ENCODE measurements at regions of chr1 and their contacts with region 1.

Region 1: DNA sequence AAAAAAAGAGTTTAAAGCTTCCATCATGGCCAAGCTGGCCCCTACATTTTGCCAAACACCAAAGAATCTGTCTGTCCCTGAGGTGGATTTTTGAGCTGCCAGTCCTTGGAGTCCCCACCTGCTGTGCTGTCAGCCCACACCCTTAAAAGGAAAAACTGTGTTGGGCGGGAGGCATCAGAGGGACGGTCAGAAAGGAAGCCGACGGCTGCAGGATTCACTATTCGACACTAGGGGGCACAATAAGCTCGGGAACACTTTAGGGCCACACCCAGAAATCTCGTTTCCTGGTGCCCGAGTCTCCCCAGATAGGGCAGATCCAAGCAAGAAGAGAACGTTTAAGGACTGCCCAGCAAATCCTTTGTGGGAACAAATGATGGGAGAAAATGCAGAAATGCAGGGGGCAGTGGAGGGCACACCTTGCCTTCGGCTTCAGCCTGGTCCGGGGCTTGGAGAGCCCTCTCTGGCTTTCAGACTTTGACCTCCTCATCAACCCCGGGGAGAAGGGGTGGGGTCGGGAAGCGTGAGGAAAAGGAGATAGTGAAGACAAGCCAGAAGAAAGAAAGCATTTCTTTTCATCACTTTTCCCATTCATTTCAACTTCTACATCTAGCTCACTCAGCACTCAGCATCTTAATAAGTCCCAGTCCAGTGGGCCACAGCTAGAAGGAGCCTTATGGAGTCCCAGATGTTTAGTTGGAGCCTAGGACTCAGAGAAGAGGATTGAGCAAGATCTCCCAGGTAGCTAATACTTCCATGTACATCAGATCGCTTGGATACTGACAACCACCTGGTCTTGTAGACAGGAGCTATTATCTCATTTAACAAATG is 5.0 kb upstream of the CTTNBP2NL start:
- DNase-seq: peak; percentile 73 to 83 (median 77)
- ATAC-seq: peak; percentile 93 to 95 (median 94)
- H3K4me3 ChIP-seq: peak overlapping the region; percentile 21 to 33 (median 33)
- H3K27ac ChIP-seq: peak overlapping the region; percentile 36 to 52 (median 45)
- H3K4me1 ChIP-seq: peaks cover 0 to 9% (median 0%) of the 10 kb centered on the region in 4 donors
- H3K27me3 ChIP-seq: no peaks in the 10 kb centered on the region
- CTCF ChIP-seq: peak; percentile 89 to 95 (median 91)
- POLR2A ChIP-seq: no peak

Region 2: DNA sequence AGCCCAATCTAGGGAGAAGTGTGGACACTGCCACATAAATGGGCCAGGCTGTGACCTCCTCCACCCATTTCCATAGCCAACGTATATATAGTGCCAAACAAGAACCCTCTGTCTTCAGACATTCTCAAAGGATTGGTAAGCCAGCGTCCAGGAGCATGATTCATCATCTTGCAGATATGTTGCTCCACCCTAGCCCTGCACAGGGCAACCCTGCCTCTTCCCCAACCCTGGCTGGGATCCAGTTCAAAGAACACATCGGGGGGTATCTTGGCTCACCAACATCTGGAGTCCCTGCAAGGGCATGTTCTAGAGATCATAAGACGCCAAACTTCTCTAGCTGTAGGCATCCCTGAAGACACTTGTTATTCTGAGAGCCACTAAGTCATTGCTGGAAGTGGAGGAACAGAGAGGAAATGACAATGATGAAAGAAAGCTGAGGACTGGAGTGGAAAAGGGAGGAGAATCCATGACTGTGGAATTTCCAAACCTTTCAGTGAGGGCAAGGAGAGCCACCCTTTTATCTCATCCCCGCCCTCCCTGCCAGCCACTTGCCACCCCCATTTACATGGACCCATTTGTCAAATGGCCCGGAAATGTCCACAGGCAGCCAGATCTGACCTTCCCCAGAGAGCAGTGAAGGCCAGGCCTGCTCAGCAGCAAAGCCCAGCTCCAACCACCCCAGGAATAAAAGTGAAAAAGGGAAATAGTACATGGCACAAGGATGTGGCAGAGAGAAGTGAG is 139.1 kb before region 1 on chr1:
- intact Hi-C with region 1: no loop called
- DNase-seq: no peak
- ATAC-seq: no peak
- H3K4me3 ChIP-seq: no peak overlapping the region
- H3K27ac ChIP-seq: no peak overlapping the region
- H3K4me1 ChIP-seq: no peaks in the 10 kb centered on the region
- H3K27me3 ChIP-seq: no peaks in the 10 kb centered on the region
- CTCF ChIP-seq: no peak
- POLR2A ChIP-seq: no peak

Region 3: DNA sequence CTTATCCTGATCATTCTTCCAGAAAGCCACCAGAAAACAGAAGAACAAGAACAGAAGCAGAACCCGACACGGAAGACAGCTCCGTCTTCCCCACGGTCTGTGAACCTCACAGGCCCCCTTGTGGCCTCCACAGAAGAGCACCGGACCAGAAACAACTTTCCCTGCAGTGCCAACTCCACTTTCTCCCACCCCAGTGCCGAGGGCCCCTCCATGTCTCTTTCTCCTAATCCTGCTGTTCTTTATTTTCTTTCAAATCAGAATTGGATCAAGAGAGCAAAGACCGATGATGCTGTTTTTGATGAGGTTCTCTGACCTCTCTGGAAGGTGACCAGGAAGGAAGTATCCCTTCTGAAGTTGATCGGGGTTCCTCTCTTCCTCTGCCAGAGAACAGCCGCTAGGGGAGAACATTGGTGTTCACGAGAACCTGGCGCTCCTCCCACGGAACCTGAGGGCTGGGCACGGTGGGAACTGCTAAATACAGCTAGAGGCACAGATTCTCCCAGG is 53.9 kb before region 1 on chr1:
- intact Hi-C with region 1: no loop called
- DNase-seq: peak in 2 of 3 donors; percentile 52 to 57
- ATAC-seq: peak; percentile 87 to 96 (median 90)
- H3K4me3 ChIP-seq: no peak overlapping the region
- H3K27ac ChIP-seq: no peak overlapping the region
- H3K4me1 ChIP-seq: no peaks in the 10 kb centered on the region
- H3K27me3 ChIP-seq: no peaks in the 10 kb centered on the region
- CTCF ChIP-seq: peak; percentile 48 to 64 (median 62)
- POLR2A ChIP-seq: no peak

Region 4: DNA sequence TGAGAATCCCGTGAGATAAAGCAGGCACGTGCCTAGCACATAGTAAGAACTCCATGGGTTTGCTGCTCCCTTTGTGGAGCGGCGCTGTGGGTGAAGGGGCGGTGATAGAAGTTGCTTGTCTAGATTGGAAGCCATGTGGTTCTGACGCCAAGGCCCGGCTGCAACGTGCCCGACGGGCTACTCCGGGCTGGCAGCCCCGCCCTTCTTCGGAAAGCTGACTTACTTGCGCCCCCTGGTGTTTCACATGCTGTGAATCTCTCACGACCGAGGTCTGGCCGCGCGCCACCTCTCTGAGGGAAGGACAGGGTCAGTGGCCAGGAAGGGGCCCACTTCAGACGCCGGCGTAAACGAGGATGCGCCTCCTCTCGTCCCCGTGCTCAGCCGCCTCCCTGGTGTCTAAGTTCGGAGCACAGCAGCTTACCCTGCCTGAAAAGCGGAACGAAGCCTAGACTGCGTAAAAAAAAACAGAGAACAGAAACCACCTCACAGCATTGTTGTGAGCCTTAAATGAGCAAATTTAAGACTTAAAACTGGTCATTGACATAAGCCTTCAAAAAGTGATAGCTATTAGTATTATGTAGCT is 75.2 kb after region 1 on chr1:
- intact Hi-C with region 1: loop called in 1 of 2 experiments (anchors 5 kb)
- DNase-seq: peak; percentile 93 to 95 (median 95)
- ATAC-seq: peak; percentile 95 to 98 (median 97)
- H3K4me3 ChIP-seq: peak overlapping the region in 1 of 3 donors; percentile 14
- H3K27ac ChIP-seq: peak overlapping the region in 2 of 3 donors; percentile 21 to 44
- H3K4me1 ChIP-seq: no peaks in the 10 kb centered on the region
- H3K27me3 ChIP-seq: no peaks in the 10 kb centered on the region
- CTCF ChIP-seq: peak; percentile 83 to 88 (median 86)
- POLR2A ChIP-seq: no peak

Region 5: DNA sequence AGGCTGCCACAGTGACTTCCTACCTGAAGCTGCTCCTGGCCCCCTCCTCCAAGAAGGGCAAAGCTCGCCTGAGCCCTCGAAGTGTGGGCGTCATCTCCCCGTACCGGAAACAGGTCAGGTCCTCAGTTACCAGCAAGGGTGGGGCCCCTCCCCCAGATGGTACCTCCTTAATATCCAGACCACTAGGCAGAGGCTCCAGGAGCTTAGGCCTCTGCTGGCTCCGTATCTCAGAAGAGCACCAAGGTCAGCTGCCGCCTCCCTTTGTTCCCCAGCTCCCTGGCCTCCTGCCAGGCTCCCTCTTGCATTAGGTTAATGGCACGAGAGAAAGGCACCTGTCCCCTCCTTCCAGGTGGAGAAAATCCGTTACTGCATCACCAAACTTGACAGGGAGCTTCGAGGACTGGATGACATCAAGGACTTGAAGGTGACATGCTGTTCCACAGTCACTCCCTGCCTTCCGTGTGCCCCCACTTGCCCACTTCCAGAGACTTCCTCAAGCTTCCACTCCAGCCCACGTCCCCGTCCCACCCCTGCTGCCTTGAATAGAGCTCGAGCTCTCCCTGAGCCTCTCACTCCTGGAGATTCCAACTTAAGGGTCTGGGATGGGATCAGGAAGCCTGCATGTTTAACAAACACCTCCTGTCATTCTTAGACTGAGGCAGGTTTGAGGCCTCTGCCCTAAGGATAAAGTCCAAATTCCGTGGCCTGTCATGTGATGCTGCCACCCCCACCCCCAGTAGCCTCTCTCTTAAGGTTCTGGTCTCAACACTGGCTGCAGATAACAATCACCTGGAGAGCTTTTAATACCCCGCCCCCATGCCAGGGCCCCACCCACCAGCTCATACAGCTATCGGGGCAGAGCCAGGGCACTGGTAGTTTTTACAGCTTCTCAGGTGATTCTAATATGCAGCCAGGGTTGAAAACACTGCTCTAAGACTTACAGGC is 307.6 kb after region 1 on chr1:
- intact Hi-C with region 1: loop called in 1 of 2 experiments (anchors 10 kb)
- DNase-seq: peak; percentile 80 to 88 (median 83)
- ATAC-seq: peak; percentile 65 to 83 (median 76)
- H3K4me3 ChIP-seq: peak overlapping the region in 1 of 3 donors; percentile 8
- H3K27ac ChIP-seq: peak overlapping the region; percentile 81 to 83 (median 83)
- H3K4me1 ChIP-seq: peaks cover 4 to 44% (median 28%) of the 10 kb centered on the region in 4 donors
- H3K27me3 ChIP-seq: no peaks in the 10 kb centered on the region
- CTCF ChIP-seq: no peak
- POLR2A ChIP-seq: no peak